ENCODE measurements at regions of chr7 and their contacts with region 1.

Region 1: GRCh38 chr7:49776994-49777393 is 3.6 kb downstream of the VWC2 start:
- DNase-seq: no peak
- ATAC-seq: peak; percentile 5

Region 2: GRCh38 chr7:49371771-49372170 is 405.2 kb before region 1 on chr7:
- intact Hi-C with region 1: no loop called
- DNase-seq: no peak
- ATAC-seq: no peak

Region 3: GRCh38 chr7:49624611-49625010 is 152.4 kb before region 1 on chr7:
- intact Hi-C with region 1: loop called (anchors 10 kb)
- DNase-seq: no peak
- ATAC-seq: peak; percentile 73

Region 4: GRCh38 chr7:49855281-49855980 is 78.4 kb after region 1 on chr7:
- intact Hi-C with region 1: no loop called
- DNase-seq: no peak
- ATAC-seq: no peak

Measured in Right ventricle myocardium superior (tissue), 1 donor.